CD8-positive, alpha-beta T cell (primary cell): ENCODE measurements at regions of chr21 and their contacts with region 1.

Region 1: GRCh38 chr21:34933609-34934335 is 115.3 kb downstream of the RUNX1 start:
- DNase-seq: peak in 4 of 9 experiments; percentile 10 to 87 (median 64)
- ATAC-seq: peak; percentile 88
- H3K4me3 ChIP-seq: peak overlapping the region; percentile 7 to 29
- H3K4me3 Mint-ChIP-seq: peak overlapping the region; percentile 80
- H3K27ac ChIP-seq: peak overlapping the region; percentile 39 to 90
- H3K27ac Mint-ChIP-seq: peak overlapping the region; percentile 99
- H3K4me1 ChIP-seq: peaks cover 60% of the 10 kb centered on the region
- H3K4me1 Mint-ChIP-seq: peaks cover 83% of the 10 kb centered on the region
- H3K27me3 ChIP-seq: no peaks in the 10 kb centered on the region
- H3K27me3 Mint-ChIP-seq: no peaks in the 10 kb centered on the region
- CTCF ChIP-seq: no peak

Region 2: DNA sequence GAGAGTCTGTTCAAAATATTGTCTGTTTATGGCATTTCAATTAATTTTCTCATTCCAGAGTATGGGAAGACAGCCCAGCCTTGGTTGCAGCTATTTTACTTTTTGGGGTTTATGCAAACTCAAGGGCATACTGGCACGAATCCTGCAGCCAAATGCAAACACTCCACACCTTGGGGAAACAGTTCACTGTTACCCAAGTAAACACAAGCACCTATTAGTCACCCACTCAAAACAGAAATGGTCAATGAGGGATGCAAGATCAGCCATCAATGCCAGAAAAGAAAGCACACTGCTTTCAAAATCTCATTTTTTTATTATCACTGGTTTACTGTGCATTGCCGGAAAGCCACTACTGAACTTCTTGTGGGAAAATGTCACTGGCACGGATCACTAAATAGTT is 55.3 kb before region 1 on chr21:
- CTCF ChIA-PET with region 1: no interaction called
- POLR2A ChIA-PET with region 1: no interaction called
- intact Hi-C with region 1: no loop called
- DNase-seq: no peak
- ATAC-seq: no peak
- H3K4me3 ChIP-seq: no peak overlapping the region
- H3K4me3 Mint-ChIP-seq: no peak overlapping the region
- H3K27ac ChIP-seq: no peak overlapping the region
- H3K27ac Mint-ChIP-seq: no peak overlapping the region
- H3K4me1 ChIP-seq: no peaks in the 10 kb centered on the region
- H3K4me1 Mint-ChIP-seq: peaks cover 35% of the 10 kb centered on the region
- H3K27me3 ChIP-seq: no peaks in the 10 kb centered on the region
- H3K27me3 Mint-ChIP-seq: no peaks in the 10 kb centered on the region
- CTCF ChIP-seq: no peak

Region 3: GRCh38 chr21:34919406-34919805 is 14.4 kb before region 1 on chr21:
- CTCF ChIA-PET with region 1: interaction called, 3 read pairs
- POLR2A ChIA-PET with region 1: interaction called, 3 read pairs
- intact Hi-C with region 1: loop called in 1 of 2 experiments (anchors 2 kb)
- DNase-seq: no peak
- ATAC-seq: no peak
- H3K4me3 ChIP-seq: no peak overlapping the region
- H3K4me3 Mint-ChIP-seq: no peak overlapping the region
- H3K27ac ChIP-seq: no peak overlapping the region
- H3K27ac Mint-ChIP-seq: no peak overlapping the region
- H3K4me1 ChIP-seq: peaks cover 6% of the 10 kb centered on the region
- H3K4me1 Mint-ChIP-seq: peaks cover 79% of the 10 kb centered on the region
- H3K27me3 ChIP-seq: no peaks in the 10 kb centered on the region
- H3K27me3 Mint-ChIP-seq: no peaks in the 10 kb centered on the region
- CTCF ChIP-seq: no peak

Region 4: DNA sequence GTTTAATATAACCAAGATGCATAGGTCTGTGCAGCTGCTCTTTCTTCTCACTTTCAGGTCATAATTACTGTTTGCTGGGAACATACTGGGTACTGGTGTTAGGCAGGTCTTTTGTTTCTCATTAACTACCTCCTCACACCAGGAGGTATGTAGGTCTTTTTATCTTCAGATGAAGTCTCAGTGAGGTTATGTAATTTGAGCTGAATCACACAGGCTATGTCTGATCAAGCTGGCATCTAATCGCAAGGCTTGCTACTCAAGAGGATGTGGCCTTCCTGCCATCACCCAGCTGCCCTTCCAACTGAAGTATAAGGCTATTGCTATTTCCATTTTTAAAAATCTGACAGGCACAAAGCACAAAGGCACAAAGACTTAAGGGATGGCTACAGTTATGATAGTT is 18.9 kb after region 1 on chr21:
- CTCF ChIA-PET with region 1: interaction called, 4 read pairs
- POLR2A ChIA-PET with region 1: interaction called, 9 read pairs
- intact Hi-C with region 1: loop called in 1 of 2 experiments (anchors 2 kb)
- DNase-seq: no peak
- ATAC-seq: peak; percentile 34
- H3K4me3 ChIP-seq: no peak overlapping the region
- H3K4me3 Mint-ChIP-seq: no peak overlapping the region
- H3K27ac ChIP-seq: no peak overlapping the region
- H3K27ac Mint-ChIP-seq: peak overlapping the region; percentile 12
- H3K4me1 ChIP-seq: peaks cover 34% of the 10 kb centered on the region
- H3K4me1 Mint-ChIP-seq: peaks cover 81% of the 10 kb centered on the region
- H3K27me3 ChIP-seq: no peaks in the 10 kb centered on the region
- H3K27me3 Mint-ChIP-seq: no peaks in the 10 kb centered on the region
- CTCF ChIP-seq: no peak

Region 5: GRCh38 chr21:34986561-34987500 is 53.1 kb after region 1 on chr21:
- CTCF ChIA-PET with region 1: interaction called, 4 read pairs
- POLR2A ChIA-PET with region 1: interaction called, 4 read pairs
- intact Hi-C with region 1: loop called in 1 of 2 experiments (anchors 2 kb)
- DNase-seq: peak; percentile 19 to 81 (median 68)
- ATAC-seq: peak; percentile 72
- H3K4me3 ChIP-seq: peak overlapping the region; percentile 3 to 7
- H3K4me3 Mint-ChIP-seq: peak overlapping the region; percentile 63
- H3K27ac ChIP-seq: peak overlapping the region; percentile 15 to 71
- H3K27ac Mint-ChIP-seq: peak overlapping the region; percentile 95
- H3K4me1 ChIP-seq: peaks cover 89% of the 10 kb centered on the region
- H3K4me1 Mint-ChIP-seq: peaks cover 93% of the 10 kb centered on the region
- H3K27me3 ChIP-seq: no peaks in the 10 kb centered on the region
- H3K27me3 Mint-ChIP-seq: no peaks in the 10 kb centered on the region
- CTCF ChIP-seq: no peak

Region 6: DNA sequence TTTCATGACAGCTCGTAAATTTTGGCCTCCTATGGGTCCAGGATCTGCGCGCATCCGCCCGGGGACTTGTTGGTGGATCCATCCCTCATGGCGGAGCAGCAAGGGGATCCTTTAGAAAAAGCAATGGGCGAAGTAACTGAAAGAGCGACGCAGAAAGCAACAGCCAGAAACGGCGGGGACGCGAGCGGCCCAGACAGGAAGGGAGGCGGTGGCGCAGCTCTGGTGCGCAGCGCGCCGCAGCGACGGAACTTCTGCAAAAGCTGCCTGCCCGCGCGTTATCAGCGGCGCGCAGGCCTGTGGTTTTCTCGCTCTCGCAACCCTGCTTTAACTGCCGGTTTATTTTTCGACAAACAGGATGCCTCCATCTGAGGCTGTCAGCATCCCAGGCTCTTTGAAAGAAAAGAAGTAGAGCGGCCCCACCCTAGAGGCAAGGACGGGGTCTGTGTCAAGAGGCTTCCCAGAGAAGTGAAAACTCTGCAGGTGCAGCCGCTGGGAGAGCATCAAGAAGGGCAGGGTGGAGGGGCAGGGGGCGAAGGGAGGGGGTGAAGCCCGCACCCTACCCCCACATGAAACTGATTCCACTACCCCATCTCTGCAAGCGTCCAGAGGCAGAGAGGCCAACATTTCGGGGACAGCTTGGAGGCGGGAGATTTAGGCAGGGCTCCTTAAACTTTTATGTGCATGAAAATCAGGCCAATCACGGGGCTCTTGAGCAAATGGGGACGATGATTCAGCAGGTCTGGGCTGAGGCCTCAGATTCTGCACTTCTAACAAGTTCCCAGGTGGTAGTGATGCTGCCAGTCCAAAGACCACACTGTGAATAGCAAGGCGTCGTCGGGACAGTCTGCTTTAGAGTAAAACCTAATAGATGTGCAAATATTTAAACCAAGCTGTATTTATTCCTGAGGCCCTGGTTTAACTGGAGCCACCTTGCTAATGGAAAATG is 93.1 kb after region 1 on chr21:
- CTCF ChIA-PET with region 1: interaction called, 4 read pairs
- POLR2A ChIA-PET with region 1: interaction called, 5 read pairs
- intact Hi-C with region 1: loop called (anchors 5 kb)
- DNase-seq: peak; percentile 75 to 96 (median 88)
- ATAC-seq: peak; percentile 83
- H3K4me3 ChIP-seq: peak overlapping the region; percentile 32 to 39
- H3K4me3 Mint-ChIP-seq: peak overlapping the region; percentile 77
- H3K27ac ChIP-seq: peak overlapping the region; percentile 74 to 77
- H3K27ac Mint-ChIP-seq: peak overlapping the region; percentile 97
- H3K4me1 ChIP-seq: peaks cover 80% of the 10 kb centered on the region
- H3K4me1 Mint-ChIP-seq: peaks cover 89% of the 10 kb centered on the region
- H3K27me3 ChIP-seq: no peaks in the 10 kb centered on the region
- H3K27me3 Mint-ChIP-seq: no peaks in the 10 kb centered on the region
- CTCF ChIP-seq: no peak

Region 7: DNA sequence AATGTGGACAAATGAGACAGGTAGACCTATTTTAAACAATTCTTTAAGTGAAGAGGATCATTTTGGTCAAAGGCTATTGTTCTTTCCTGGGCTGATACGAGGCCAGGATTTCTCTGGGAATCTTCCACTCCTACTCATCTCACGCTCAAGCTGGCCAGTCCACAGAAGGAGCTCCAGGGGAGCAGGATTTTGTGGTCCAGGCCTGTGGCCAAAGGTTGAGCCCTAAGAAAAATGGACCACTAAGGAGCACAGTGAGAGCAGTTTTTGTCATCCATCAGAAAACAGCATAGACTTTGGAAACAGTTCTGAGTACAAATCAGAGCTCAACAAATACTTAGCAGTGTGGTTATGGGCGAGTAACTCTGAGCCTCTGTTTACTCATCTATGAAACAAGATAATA is 375.5 kb after region 1 on chr21:
- CTCF ChIA-PET with region 1: no interaction called
- POLR2A ChIA-PET with region 1: no interaction called
- intact Hi-C with region 1: no loop called
- DNase-seq: no peak
- ATAC-seq: no peak
- H3K4me3 ChIP-seq: no peak overlapping the region
- H3K4me3 Mint-ChIP-seq: no peak overlapping the region
- H3K27ac ChIP-seq: no peak overlapping the region
- H3K27ac Mint-ChIP-seq: no peak overlapping the region
- H3K4me1 ChIP-seq: no peaks in the 10 kb centered on the region
- H3K4me1 Mint-ChIP-seq: no peaks in the 10 kb centered on the region
- H3K27me3 ChIP-seq: no peaks in the 10 kb centered on the region
- H3K27me3 Mint-ChIP-seq: no peaks in the 10 kb centered on the region
- CTCF ChIP-seq: no peak